Lower lobe of right lung (tissue), 2 donors: ENCODE measurements at regions of chr4 and their contacts with region 1.

Region 1: GRCh38 chr4:125314676-125315575 is at the start of gene FAT4:
- DNase-seq: peak; percentile 93
- ATAC-seq: peak; percentile 93 to 94
- H3K4me3 ChIP-seq: peak within 1 kb of the TSS; percentile 72
- H3K27ac ChIP-seq: peak within 1 kb of the TSS; percentile 85
- H3K4me1 ChIP-seq: peaks cover 44% of the 10 kb centered on the region
- H3K27me3 ChIP-seq: no peaks in the 10 kb centered on the region
- CTCF ChIP-seq: no peak
- total RNA-seq, gene FAT4: 15.2 TPM

Region 2: DNA sequence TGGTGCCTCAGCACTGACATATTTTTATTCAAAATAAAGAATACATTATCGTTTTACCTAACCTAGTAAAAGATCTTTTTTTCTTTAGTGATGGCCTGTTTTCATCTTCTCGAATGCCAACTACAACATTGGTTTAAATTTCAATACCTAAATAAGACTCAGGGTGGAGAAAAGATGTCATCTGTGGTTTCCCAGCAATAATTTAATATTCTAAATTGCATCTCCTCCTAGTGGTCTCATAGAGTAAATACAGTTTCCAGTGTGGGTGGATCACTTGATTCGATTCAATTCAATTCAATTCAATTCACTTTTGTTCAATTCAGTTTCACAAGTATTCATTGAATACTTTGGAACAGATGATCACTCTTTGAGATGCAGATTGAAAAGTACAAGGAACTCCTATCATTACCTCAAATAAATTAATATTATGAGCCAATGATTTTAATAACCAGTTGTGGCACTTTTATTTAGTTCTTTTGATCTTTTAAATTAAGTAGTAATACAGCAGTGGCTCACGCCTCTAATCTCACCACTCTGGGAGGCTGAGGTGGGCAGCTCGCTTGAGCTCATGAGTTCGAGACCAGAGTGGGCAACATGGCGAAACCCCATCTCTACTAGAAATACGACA is 427.0 kb after region 1 on chr4:
- intact Hi-C with region 1: loop called (anchors 10 kb)
- DNase-seq: no peak
- ATAC-seq: peak in 1 of 2 donors; percentile 61
- H3K4me3 ChIP-seq: no peak overlapping the region
- H3K27ac ChIP-seq: no peak overlapping the region
- H3K4me1 ChIP-seq: peaks cover 5% of the 10 kb centered on the region
- H3K27me3 ChIP-seq: no peaks in the 10 kb centered on the region
- CTCF ChIP-seq: peak; percentile 69